ENCODE measurements at regions of chr12 and their contacts with region 1.

Region 1: DNA sequence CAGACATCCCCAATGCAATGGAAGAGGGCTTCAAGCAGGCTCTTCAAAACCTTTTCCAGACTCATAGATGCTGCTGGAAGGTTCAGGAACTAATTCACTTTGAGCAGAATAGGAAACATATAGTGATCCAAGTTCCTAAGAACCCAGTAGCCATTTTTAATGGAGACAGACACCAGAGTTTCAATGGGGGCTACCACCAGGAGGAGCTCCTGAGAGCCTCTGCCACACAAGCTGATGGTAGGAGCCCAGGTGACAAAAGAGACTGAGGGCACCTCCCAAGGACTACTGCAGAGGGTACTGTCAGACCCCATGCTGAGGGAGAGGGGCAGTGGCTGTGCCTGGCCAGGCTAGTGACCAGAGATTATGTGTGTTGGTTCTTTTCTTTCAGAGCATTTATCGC is 45.9 kb downstream of the IFNG start:
- DNase-seq: peak; percentile 53
- ATAC-seq: peak; percentile 68
- H3K4me3 Mint-ChIP-seq: no peak overlapping the region
- H3K27ac Mint-ChIP-seq: no peak overlapping the region
- H3K4me1 Mint-ChIP-seq: peaks cover 38% of the 10 kb centered on the region
- H3K27me3 Mint-ChIP-seq: no peaks in the 10 kb centered on the region

Region 2: GRCh38 chr12:68080577-68080976 is 33.1 kb before region 1 on chr12:
- CTCF ChIA-PET with region 1: interaction called, 12 read pairs
- POLR2A ChIA-PET with region 1: no interaction called
- DNase-seq: peak; percentile 82
- ATAC-seq: peak; percentile 91
- H3K4me3 Mint-ChIP-seq: peak overlapping the region; percentile 27
- H3K27ac Mint-ChIP-seq: peak overlapping the region; percentile 81
- H3K4me1 Mint-ChIP-seq: peaks cover 35% of the 10 kb centered on the region
- H3K27me3 Mint-ChIP-seq: no peaks in the 10 kb centered on the region

Region 3: GRCh38 chr12:68131869-68132405 is 18.3 kb after region 1 on chr12:
- CTCF ChIA-PET with region 1: interaction called, 12 read pairs
- POLR2A ChIA-PET with region 1: no interaction called
- DNase-seq: no peak
- ATAC-seq: no peak
- H3K4me3 Mint-ChIP-seq: no peak overlapping the region
- H3K27ac Mint-ChIP-seq: no peak overlapping the region
- H3K4me1 Mint-ChIP-seq: peaks cover 37% of the 10 kb centered on the region
- H3K27me3 Mint-ChIP-seq: no peaks in the 10 kb centered on the region

Region 4: DNA sequence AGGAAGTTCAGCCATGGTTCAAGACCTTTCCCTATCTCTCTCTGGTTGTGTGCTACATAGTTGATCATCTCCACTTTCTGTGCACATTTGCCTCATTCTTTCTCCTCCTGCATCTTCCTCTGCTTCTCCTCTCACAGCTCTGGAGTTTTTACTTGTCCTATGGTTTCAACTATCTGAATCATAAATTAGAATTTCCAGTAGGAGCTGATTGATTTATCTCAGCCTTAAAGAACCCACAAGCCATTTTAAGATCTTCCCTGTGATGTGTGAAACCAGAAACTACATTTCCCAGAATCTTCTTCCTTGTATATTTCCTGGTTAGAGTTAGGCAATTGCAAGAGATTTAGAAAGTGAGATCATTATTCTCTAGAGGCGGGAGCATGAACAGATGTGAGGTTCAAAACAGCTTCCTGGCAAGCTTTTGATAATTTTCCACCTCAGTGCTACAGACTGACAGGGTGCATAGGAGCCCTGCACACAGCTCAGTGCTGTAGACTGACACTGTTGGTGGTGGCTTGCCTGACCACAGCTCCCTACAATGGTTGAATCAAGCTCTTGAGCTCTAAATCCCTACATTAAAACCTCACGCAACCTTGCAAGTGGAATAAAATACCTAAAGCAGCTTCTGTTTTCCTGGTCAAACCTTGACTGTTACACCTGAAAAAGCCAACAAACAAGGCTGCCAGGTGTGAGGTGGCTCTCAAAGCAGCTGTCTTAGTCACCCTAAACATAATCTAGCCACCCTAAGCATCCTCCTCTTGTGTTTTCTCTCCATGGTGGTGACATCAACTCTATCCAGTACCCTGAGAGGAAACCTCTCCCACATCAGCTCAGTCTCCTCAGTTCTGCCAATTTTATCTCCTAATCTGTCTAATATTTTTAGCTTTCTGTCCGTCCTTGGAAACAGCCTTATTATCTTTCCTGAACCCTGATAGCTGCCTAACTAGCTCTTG is 67.4 kb after region 1 on chr12:
- CTCF ChIA-PET with region 1: interaction called, 10 read pairs
- POLR2A ChIA-PET with region 1: no interaction called
- DNase-seq: peak; percentile 76
- ATAC-seq: peak; percentile 93
- H3K4me3 Mint-ChIP-seq: peak overlapping the region; percentile 15
- H3K27ac Mint-ChIP-seq: peak overlapping the region; percentile 80
- H3K4me1 Mint-ChIP-seq: peaks cover 55% of the 10 kb centered on the region
- H3K27me3 Mint-ChIP-seq: no peaks in the 10 kb centered on the region